Activated CD4-positive, alpha-beta T cell treated with anti-CD3 and anti-CD28 coated beads for 36 hours (primary cell): ENCODE measurements at regions of chr22 and their contacts with region 1.

Region 1: DNA sequence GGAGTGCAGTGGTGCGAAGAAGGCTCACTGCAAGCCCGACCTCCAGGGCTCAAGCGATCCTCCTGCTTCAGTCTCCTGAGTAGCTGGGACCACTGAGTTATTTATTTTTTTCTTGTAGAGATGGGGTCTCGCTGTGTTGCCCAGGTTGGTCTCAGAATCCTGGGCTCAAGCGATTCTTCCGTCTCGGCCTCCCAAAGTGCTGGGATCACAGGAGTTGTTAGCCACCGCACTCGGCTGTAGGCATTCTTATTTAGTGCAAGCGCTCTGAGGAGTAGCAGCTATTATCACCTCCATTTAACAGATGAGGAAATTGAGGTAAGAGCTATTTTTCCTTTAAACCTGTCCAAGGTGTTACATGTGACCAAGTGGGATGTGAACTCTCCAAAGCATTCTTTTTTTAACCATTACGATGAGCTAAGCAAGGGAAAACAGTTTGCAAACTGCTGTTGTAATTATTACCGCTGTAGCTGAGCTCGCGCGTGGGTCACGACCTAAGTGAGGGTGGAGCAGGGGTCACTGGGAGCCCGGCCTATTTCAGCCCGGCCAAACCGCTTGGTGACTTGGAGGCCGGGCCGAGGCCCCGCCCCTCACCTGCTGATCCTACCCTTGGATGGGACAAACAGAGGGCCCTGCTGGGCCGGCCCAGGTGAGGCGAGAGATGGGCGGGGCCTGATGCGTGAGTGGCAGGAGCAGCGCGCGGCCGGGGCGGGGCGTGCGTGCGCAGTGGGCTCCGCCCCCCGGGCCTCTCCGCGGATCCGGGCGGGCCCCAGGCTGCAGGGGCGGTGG is 449 bp upstream of the KREMEN1 start:
- DNase-seq: peak; percentile 93
- ATAC-seq: peak; percentile 98
- H3K4me3 Mint-ChIP-seq: peak overlapping the region; percentile 66
- H3K27ac Mint-ChIP-seq: no peak overlapping the region
- H3K4me1 Mint-ChIP-seq: peaks cover 15% of the 10 kb centered on the region
- H3K27me3 Mint-ChIP-seq: peaks cover 51% of the 10 kb centered on the region

Region 2: GRCh38 chr22:28741758-28742561 is 330.4 kb before region 1 on chr22 and contains the starts of genes CHEK2 and HSCB:
- CTCF ChIA-PET with region 1: no interaction called
- POLR2A ChIA-PET with region 1: no interaction called
- intact Hi-C with region 1: loop called in 1 of 2 experiments (anchors 1 kb)
- DNase-seq: peak; percentile 99
- ATAC-seq: peak; percentile 93
- H3K4me3 Mint-ChIP-seq: peak within 1 kb of the TSS; percentile 81
- H3K27ac Mint-ChIP-seq: peak within 1 kb of the TSS; percentile 83
- H3K4me1 Mint-ChIP-seq: peaks cover 32% of the 10 kb centered on the region
- H3K27me3 Mint-ChIP-seq: no peaks in the 10 kb centered on the region
- total RNA-seq, gene CHEK2: 37.5 to 41.3 TPM
- total RNA-seq, gene HSCB: 16.5 to 18.5 TPM

Region 3: DNA sequence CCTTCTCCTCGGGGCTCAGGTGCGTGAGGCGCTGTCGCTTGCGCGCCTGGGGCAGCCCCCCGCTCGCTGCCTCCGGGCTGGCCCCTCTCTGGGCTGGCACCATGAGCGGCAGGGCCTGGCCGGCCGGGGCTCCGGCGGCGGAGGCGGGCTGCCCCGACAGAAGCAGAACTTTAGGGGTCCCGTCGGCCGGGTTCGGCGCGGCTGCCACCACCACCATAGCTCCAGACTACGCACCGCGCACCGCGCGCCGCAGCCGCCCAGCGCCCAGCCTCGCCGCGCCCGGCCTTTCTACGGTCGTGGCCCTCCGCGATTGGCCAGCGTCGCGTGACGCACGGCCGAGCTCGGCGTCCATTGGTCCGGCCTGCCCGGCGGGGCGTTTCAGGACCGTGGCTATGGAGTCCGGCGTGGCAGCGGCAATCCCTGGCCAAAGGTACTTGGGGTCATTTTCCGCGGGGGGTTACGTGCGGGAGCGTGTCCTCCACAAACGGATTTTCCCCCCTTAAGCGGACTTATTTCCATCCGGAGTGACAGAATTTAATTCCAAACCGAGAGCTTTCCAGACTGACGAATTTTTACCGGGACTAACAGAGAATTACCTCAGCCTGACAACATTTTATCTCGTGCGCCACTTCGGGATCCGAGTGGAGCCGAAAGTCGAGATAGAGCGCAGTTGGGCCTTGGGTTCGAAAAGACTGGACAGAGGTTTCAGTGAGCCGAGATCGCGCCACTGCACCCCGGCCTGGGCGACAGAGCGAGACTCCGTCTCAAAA is 271.9 kb before region 1 on chr22 and contains the start of gene XBP1:
- CTCF ChIA-PET with region 1: no interaction called
- POLR2A ChIA-PET with region 1: no interaction called
- intact Hi-C with region 1: loop called in 1 of 2 experiments (anchors 2 kb)
- DNase-seq: peak; percentile 93
- ATAC-seq: peak; percentile 85
- H3K4me3 Mint-ChIP-seq: peak within 1 kb of the TSS; percentile 84
- H3K27ac Mint-ChIP-seq: peak within 1 kb of the TSS; percentile 99
- H3K4me1 Mint-ChIP-seq: peaks cover 44% of the 10 kb centered on the region
- H3K27me3 Mint-ChIP-seq: no peaks in the 10 kb centered on the region
- total RNA-seq, gene XBP1: 88.8 to 101 TPM

Region 4: DNA sequence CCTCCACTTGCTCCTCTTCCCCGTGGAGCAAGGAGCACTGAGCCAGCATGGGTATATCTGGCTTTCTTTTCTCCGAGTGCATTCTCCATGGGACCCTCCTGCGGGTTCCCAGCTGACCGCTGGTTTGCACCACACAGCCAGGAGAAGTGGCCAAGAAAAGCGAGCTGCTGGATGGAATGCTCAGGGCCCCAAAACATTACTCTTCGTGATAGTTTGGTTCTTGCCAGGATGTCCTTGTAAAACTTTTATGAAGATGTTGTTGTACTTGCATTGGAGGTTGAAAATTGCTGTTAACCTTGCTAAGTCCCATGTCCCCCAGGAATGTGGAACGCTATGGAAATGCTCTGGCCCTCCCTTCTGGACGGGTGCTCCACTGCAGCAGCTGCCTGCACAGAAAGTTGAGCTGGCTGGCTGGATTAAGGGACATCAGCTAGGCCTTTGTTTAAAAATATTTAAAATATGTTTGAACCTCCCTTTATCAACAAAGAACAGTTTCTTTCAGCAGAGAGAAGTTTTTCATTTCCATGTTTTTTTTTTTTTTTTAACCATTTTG is 120.3 kb before region 1 on chr22:
- CTCF ChIA-PET with region 1: no interaction called
- POLR2A ChIA-PET with region 1: no interaction called
- intact Hi-C with region 1: loop called in 1 of 2 experiments (anchors 5 kb)
- DNase-seq: no peak
- ATAC-seq: no peak
- H3K4me3 Mint-ChIP-seq: no peak overlapping the region
- H3K27ac Mint-ChIP-seq: no peak overlapping the region
- H3K4me1 Mint-ChIP-seq: peaks cover 18% of the 10 kb centered on the region
- H3K27me3 Mint-ChIP-seq: peaks cover 71% of the 10 kb centered on the region

Region 5: DNA sequence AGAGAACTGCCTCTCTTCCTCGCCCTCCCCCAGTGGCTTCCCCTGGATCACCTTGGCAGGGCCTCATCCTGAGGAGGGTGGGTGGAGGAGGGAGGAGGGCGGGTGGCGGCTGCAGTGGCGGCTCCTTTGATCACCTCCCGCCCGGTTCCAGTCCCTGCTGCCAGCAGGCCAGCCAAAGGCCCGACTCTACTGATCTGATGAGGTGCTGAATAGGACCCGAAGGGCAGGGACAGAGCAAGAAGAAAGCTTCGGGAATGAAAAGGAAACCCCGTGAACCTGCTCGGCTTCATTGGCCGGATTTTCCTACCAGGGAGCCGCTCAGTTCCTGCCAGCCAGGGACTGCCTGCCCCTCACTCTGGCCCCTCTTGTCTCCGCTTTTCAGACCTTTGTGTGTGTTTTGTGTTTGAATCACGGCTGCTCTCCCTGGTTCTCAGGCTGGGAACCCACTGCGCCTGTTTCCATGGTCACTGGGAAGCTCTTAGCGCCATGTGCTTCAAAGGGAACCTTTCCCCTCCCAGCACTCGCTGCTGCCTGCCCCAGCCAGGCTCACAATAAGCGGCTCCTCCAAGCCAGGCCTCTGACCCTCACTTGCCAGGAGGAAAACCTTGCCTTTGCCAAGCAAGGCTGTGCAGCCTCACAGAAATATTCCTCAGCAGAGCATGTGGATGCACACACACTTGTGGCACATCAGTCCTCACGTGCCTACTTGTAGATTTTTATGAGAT is 67.6 kb before region 1 on chr22:
- CTCF ChIA-PET with region 1: no interaction called
- POLR2A ChIA-PET with region 1: no interaction called
- intact Hi-C with region 1: no loop called
- DNase-seq: peak; percentile 12
- ATAC-seq: no peak
- H3K4me3 Mint-ChIP-seq: no peak overlapping the region
- H3K27ac Mint-ChIP-seq: no peak overlapping the region
- H3K4me1 Mint-ChIP-seq: peaks cover 6% of the 10 kb centered on the region
- H3K27me3 Mint-ChIP-seq: peaks cover 25% of the 10 kb centered on the region

Region 6: GRCh38 chr22:29387921-29388758 is 315.8 kb after region 1 on chr22 and contains the start of gene AP1B1:
- CTCF ChIA-PET with region 1: no interaction called
- POLR2A ChIA-PET with region 1: no interaction called
- intact Hi-C with region 1: loop called in 1 of 2 experiments (anchors 1 kb)
- DNase-seq: peak; percentile 97
- ATAC-seq: peak; percentile 99
- H3K4me3 Mint-ChIP-seq: peak within 1 kb of the TSS; percentile 87
- H3K27ac Mint-ChIP-seq: peak within 1 kb of the TSS; percentile 83
- H3K4me1 Mint-ChIP-seq: peaks cover 30% of the 10 kb centered on the region
- H3K27me3 Mint-ChIP-seq: no peaks in the 10 kb centered on the region
- total RNA-seq, gene AP1B1: 56.6 to 59.9 TPM